ENCODE measurements at regions of chr12 and their contacts with region 1.

Region 1: DNA sequence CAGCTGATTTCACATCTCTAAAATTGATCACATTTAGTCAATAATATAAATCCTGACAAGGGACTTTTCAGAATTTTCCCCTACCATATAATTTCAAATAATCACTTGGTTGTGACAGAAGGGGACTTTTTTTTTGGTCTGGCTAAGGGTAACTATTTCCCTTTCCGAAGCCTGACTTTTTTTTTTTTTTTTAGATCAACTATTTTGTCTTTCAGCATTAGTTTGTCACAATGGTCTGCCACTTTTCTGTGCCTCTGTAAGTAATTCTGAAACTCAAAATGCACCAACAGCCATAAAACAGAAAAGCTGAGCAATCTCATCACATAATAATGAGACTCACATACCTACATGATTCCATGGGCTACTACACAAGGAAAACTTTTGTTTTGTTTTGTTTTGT is 266.4 kb downstream of the SSPN start:
- DNase-seq: no peak
- ATAC-seq: peak; percentile 79
- H3K4me3 Mint-ChIP-seq: peak overlapping the region; percentile 22
- H3K27ac Mint-ChIP-seq: peak overlapping the region; percentile 54
- H3K4me1 Mint-ChIP-seq: peaks cover 24% of the 10 kb centered on the region
- H3K27me3 Mint-ChIP-seq: no peaks in the 10 kb centered on the region
- CTCF ChIP-seq: no peak

Region 2: GRCh38 chr12:26443309-26443708 is 18.5 kb before region 1 on chr12:
- CTCF ChIA-PET with region 1: interaction called, 3 read pairs
- POLR2A ChIA-PET with region 1: interaction called, 6 read pairs
- intact Hi-C with region 1: loop called (anchors 2 kb)
- DNase-seq: no peak
- ATAC-seq: peak; percentile 25
- H3K4me3 Mint-ChIP-seq: no peak overlapping the region
- H3K27ac Mint-ChIP-seq: no peak overlapping the region
- H3K4me1 Mint-ChIP-seq: peaks cover 22% of the 10 kb centered on the region
- H3K27me3 Mint-ChIP-seq: no peaks in the 10 kb centered on the region
- CTCF ChIP-seq: no peak

Region 3: GRCh38 chr12:26725517-26725916 is 263.7 kb after region 1 on chr12:
- CTCF ChIA-PET with region 1: no interaction called
- POLR2A ChIA-PET with region 1: no interaction called
- intact Hi-C with region 1: no loop called
- DNase-seq: no peak
- ATAC-seq: no peak
- H3K4me3 Mint-ChIP-seq: no peak overlapping the region
- H3K27ac Mint-ChIP-seq: no peak overlapping the region
- H3K4me1 Mint-ChIP-seq: peaks cover 33% of the 10 kb centered on the region
- H3K27me3 Mint-ChIP-seq: no peaks in the 10 kb centered on the region
- CTCF ChIP-seq: no peak

Measured in activated B cell treated with CpG ODN at 0.5 μM for 24 hours (primary cell).